ENCODE measurements at regions of chr7 and their contacts with region 1.

Region 1: DNA sequence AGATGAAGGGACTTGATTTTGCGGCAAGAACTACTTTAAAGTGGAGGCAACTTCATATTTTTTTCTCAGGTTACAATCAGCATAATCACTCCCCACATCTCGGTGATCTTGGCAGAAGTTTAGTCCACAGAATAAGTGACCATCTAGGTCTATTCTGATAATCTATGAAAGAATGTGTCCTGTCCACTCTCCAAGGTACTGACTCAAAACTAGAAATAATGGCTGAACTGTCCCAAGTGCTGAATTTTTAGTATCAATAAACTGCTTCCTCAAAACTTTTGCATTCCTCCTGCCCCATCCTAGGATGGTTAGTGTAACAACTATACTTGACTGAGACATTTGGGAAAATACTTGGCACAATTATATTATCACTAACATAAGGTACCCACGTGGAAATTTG is 10.9 kb upstream of the CHRM2 start:
- DNase-seq: no peak
- ATAC-seq: no peak

Region 2: DNA sequence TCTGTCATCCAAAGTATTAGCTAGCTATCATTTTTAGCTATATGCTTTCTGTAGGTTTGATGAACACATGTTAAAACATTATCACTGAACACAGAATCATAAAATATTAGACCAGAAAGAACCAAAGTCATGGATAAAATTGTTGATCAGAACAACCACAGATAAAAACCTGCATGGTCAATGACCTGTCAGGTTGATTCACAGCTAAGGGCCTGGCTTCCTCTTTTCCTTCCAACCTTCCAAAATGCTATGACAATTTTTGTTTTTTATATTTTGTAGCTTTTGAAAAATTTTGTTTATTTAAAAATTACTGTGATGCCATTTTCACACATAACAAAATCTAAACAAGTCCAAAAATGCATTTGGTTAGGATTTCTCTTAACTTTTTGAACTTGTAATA is 433.5 kb before region 1 on chr7:
- intact Hi-C with region 1: loop called (anchors 10 kb)
- DNase-seq: no peak
- ATAC-seq: no peak

Measured in left ventricle myocardium superior (tissue), 1 donor.